ENCODE measurements at regions of chr12 and their contacts with region 1.

Region 1: GRCh38 chr12:42372154-42372791 is 46.3 kb downstream of the PPHLN1 start:
- DNase-seq: peak; percentile 54
- H3K4me3 ChIP-seq: no peak overlapping the region; a peak in 1 of 4 replicates
- H3K27ac ChIP-seq: no peak overlapping the region
- H3K4me1 ChIP-seq: no peaks in the 10 kb centered on the region
- H3K27me3 ChIP-seq: no peaks in the 10 kb centered on the region
- CTCF ChIP-seq: peak; percentile 76
- EP300 ChIP-seq: no peak
- RAD21 ChIP-seq: peak; percentile 87

Region 2: DNA sequence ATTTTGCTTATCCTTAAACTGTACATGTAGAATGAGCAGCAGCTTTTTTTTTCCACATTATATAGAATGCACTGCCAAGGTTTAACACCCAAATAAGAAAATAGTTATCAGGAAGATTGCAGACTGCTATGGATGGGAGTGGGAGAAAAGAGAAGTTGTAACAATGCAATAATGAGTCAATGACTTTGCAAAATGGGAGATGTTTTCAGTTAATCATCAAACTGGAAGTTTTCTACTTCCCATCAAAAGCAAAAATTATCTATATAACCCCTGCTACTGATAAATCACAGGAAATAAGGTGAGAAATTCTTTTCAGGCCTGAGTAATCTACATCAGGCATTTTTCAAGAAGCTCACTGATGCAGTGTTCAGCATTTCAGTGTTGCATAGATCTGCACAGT is 536.7 kb before region 1 on chr12:
- CTCF ChIA-PET with region 1: no interaction called
- POLR2A ChIA-PET with region 1: no interaction called
- DNase-seq: no peak
- H3K4me3 ChIP-seq: no peak overlapping the region
- H3K27ac ChIP-seq: no peak overlapping the region
- H3K4me1 ChIP-seq: no peaks in the 10 kb centered on the region
- H3K27me3 ChIP-seq: no peaks in the 10 kb centered on the region
- CTCF ChIP-seq: no peak
- EP300 ChIP-seq: no peak
- RAD21 ChIP-seq: no peak

Region 3: GRCh38 chr12:42346403-42347002 is 25.8 kb before region 1 on chr12:
- CTCF ChIA-PET with region 1: interaction called, 14 read pairs
- POLR2A ChIA-PET with region 1: no interaction called
- DNase-seq: no peak
- H3K4me3 ChIP-seq: no peak overlapping the region
- H3K27ac ChIP-seq: no peak overlapping the region
- H3K4me1 ChIP-seq: no peaks in the 10 kb centered on the region
- H3K27me3 ChIP-seq: no peaks in the 10 kb centered on the region
- CTCF ChIP-seq: no peak
- EP300 ChIP-seq: no peak
- RAD21 ChIP-seq: no peak

Region 4: DNA sequence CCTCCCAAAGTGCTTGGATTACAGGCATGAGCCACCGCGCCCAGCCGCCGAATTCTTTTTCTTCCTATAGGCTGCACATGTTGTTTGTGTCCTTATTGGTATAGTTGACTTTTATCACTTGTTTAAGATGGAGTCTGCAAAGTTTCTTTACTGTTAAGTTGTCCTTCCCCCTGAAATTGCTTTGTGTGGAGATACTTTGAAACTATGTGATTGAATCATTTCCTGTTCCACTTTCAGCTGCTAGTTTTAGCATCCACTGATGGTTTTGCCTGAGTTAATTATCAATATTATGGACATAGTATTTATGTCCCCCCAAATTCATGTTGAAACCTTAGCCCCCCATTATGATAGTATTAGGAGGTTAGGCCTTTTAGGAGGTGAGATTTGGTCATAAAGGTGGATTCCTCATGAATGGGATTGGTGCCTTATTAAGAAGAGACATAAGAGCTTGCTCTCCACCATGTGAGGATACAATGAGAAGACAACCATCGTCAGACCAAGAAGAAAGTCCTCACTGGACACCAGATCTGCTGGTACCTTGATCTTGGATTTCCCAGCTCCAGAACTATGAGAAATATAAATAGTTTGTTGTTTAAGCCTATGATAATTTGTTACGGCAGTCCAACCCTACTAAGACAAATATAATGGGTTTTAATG is 11.4 kb before region 1 on chr12:
- CTCF ChIA-PET with region 1: interaction called, 14 read pairs
- POLR2A ChIA-PET with region 1: no interaction called
- DNase-seq: no peak
- H3K4me3 ChIP-seq: no peak overlapping the region
- H3K27ac ChIP-seq: no peak overlapping the region
- H3K4me1 ChIP-seq: peaks cover 0 to 2% of the 10 kb centered on the region in 2 experiments; a peak in 2 of 4 replicates
- H3K27me3 ChIP-seq: no peaks in the 10 kb centered on the region
- CTCF ChIP-seq: no peak
- EP300 ChIP-seq: no peak
- RAD21 ChIP-seq: no peak

Measured in SK-N-SH (cell line).